ENCODE measurements at regions of chr20 and their contacts with region 1.

Region 1: DNA sequence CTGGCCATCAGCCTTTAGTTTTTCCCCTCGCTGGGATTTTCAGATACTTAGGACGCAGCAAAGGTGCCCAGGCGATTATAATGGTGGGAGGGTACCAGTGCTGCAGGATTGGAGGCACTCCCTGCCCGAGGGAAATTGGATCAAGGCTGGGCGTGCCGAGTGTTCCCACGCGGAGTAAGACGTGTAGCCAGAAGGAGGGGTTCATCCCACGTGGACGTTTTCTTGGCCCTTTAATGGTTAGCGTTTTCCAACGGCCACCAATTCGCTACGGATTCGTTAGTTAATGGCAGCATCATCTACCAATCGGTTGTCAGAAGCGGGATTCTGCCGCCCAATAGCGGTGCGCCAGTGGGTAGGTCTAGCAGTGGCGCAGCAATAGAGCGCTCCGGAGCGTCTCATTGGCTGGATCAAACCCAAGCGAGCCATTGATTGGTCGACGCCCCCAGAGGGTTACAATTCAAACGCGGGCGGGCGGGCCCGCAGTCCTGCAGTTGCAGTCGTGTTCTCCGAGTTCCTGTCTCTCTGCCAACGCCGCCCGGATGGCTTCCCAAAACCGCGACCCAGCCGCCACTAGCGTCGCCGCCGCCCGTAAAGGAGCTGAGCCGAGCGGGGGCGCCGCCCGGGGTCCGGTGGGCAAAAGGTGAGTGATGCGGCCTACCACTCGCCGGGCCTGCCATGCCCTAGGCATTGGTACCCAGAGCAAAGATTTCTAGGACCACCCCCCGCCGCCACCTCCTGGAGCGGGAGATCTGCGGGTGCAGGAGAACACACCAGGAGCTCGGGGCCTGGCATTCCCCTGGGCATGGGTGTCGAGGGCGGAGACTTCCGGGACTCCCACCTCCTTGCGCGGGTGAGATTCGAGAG is at the start of gene UBE2C:
- DNase-seq: peak; percentile 93 to 97
- ATAC-seq: peak; percentile 99 to 100 (median 99)
- H3K4me3 ChIP-seq: peak within 1 kb of the TSS; percentile 51
- H3K4me3 Mint-ChIP-seq: peak within 1 kb of the TSS; percentile 87
- H3K27ac ChIP-seq: no peak within 1 kb of the TSS
- H3K27ac Mint-ChIP-seq: peak within 1 kb of the TSS; percentile 68
- H3K4me1 ChIP-seq: peaks cover 17% of the 10 kb centered on the region
- H3K4me1 Mint-ChIP-seq: peaks cover 16% of the 10 kb centered on the region in 2 donors
- H3K27me3 ChIP-seq: no peaks in the 10 kb centered on the region
- H3K27me3 Mint-ChIP-seq: no peaks in the 10 kb centered on the region
- CTCF ChIP-seq: no peak
- total RNA-seq, gene UBE2C: 0.54 to 3.2 TPM in 2 of 3 donors, not detected in the other

Region 2: DNA sequence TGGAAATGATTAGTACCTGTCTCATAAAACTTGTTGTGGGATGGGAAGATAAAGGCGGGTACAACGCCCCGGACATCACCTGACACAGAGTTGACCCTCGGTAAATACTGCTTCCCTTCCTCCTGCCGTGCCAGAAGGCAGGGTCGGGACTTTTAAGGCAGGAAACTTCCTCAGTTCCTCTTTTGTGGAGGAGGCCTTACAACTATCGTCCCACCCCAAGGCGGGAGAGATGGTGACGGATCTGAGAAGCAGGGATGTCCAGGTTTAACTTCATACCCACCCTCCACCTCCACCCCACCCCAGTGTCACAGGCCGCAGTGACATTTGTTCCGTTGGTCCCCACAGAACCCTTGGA is 20.1 kb before region 1 on chr20:
- intact Hi-C with region 1: loop called (anchors 1 kb)
- DNase-seq: no peak
- ATAC-seq: peak in 1 of 3 donors; percentile 33
- H3K4me3 ChIP-seq: peak overlapping the region; percentile 81
- H3K4me3 Mint-ChIP-seq: peak overlapping the region; percentile 93
- H3K27ac ChIP-seq: peak overlapping the region; percentile 83
- H3K27ac Mint-ChIP-seq: peak overlapping the region; percentile 91 to 93
- H3K4me1 ChIP-seq: peaks cover 17% of the 10 kb centered on the region
- H3K4me1 Mint-ChIP-seq: peaks cover 13 to 15% of the 10 kb centered on the region in 2 donors
- H3K27me3 ChIP-seq: no peaks in the 10 kb centered on the region
- H3K27me3 Mint-ChIP-seq: no peaks in the 10 kb centered on the region
- CTCF ChIP-seq: no peak

Measured in natural killer cell (primary cell).